AG04449 (cell line): ENCODE measurements at regions of chr2 and their contacts with region 1.

Region 1: GRCh38 chr2:126971481-126972278 is 73.0 kb downstream of the TEX51 start:
- DNase-seq: no peak
- H3K4me3 ChIP-seq: peak overlapping the region; percentile 35
- CTCF ChIP-seq: peak; percentile 97

Region 2: DNA sequence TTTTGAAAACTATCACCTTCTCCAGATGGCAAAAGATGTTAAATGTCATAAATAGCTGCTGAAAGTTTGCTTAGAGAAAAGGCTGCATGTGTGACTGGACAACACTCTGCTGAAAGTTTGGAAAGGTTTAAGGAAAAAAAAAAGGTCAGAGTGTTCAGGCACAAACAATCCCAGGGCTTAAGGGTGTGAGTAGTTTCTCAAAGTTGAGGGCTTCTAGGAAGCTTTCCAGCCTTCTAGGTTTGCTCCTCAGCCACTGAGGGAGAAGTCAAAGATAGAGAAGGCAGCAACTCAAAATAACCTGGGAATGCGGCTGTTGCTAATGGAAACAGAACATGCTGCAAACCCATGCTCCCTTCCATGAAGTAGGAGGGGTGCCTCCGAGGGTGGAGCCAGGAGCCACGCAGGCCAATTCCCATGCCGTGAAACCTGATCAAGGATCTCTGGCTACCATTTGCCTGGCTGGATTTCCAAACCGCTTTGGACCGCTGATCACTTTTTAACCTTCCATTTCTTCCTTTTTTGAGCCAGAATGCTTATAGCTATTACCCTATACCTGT is 15.0 kb after region 1 on chr2:
- CTCF ChIA-PET with region 1: interaction called, 19 read pairs
- POLR2A ChIA-PET with region 1: no interaction called
- DNase-seq: no peak
- H3K4me3 ChIP-seq: no peak overlapping the region
- CTCF ChIP-seq: no peak